RWPE1 (cell line): ENCODE measurements at regions of chr20 and their contacts with region 1.

Region 1: DNA sequence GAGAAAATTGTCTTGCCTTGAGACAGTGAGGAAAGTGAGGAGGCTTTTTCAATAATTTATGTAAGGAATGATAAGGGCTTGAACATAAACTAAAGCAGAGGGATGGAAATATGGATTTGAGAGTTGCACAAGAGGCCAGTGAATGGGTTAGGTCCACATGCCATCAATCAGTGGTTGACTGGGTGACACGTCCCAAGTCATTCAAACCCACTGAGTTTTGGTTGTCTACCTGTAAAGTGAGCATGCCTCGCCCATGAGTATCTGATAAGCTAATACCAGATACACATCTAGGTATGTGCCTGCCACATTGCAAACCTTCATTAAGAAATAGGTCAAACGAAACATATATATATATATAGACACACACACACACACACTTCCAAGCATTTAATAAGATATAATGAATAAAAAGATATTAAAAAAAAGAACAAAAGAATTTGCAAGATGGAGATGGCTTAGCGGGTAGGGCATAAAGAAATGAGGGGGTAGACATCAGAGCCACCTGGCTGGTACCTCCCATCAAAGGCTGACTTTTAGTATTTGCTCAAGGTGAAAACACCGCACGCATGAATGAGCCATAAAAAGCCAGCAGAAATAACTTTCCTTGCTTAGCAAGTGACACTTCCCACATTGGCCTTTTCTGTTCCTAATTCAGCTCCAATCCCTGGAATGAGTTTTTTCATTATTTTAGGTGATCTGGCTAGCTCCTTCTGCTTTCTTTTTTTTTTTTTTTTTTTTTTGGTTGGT is 109.1 kb upstream of the GGTLC1 start:
- DNase-seq: no peak
- H3K27ac ChIP-seq: no peak overlapping the region
- CTCF ChIP-seq: no peak

Region 2: DNA sequence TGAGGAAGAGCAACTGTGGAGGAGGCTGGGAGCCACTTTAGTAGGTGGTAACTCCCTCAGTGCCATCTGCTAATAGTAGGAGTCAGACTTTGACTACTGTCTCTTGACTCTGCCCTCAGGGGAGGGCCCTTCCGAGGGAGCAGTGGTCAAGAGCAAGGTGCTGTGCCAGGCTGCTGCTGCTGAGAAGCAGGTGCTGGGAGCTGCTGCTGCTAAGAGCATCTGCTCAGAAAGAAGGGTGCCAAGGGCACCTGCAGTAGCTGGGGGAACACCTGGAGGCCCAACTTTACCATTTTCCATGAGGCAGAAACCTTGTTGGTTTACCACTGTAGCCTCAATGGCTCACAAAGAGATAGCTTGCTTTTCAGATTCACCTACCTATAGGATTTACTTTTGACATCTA is 127.6 kb before region 1 on chr20:
- CTCF ChIA-PET with region 1: no interaction called
- POLR2A ChIA-PET with region 1: interaction called, 10 read pairs
- DNase-seq: no peak
- H3K27ac ChIP-seq: no peak overlapping the region
- CTCF ChIP-seq: no peak

Region 3: DNA sequence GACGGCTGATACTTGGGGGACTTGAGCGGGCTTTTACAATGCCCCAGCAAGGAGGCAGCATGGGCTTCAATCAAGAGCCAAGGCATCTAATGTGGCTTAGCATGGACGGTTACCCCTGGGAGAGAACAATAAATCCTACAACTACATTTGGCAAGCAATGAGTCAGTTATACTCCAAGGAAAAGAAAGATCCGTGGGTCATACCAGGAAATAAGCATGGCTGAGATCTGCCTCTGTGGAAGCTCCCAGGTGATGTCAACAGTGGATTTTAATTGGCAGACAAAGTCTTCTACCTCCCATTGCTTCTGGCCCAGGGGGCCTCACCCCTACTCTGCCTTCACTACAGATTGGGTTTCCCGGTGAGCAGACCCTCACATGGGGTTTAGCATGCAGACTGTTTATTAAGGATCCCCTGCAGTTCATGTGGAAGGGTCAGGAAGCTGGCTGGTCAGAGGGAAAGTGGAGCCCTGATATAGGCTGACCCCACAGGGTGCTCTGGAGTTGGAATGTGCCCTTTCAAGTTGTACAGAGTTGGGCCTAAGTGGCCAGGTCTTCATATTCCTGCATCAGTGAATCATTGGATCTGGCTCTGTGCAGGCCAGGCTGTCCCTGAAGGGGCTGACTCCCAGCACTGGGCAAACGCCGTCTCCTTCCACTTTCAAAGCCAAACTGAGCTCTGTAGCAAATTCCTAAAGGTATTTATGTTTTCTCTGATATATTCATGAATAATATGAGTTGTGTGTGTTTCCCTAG is 17.8 kb before region 1 on chr20:
- CTCF ChIA-PET with region 1: no interaction called
- POLR2A ChIA-PET with region 1: no interaction called
- DNase-seq: no peak
- H3K27ac ChIP-seq: no peak overlapping the region
- CTCF ChIP-seq: no peak